ENCODE measurements at regions of chr19 and their contacts with region 1.

Region 1: GRCh38 chr19:55599468-55600279 is at the start of gene FIZ1:
- DNase-seq: peak; percentile 99
- ATAC-seq: peak; percentile 97
- H3K4me3 ChIP-seq: peak within 1 kb of the TSS; percentile 72 to 82
- H3K27ac ChIP-seq: peak within 1 kb of the TSS; percentile 83 to 89
- H3K4me1 ChIP-seq: no peaks in the 10 kb centered on the region
- H3K27me3 ChIP-seq: no peaks in the 10 kb centered on the region
- total RNA-seq, gene FIZ1: 12.7 to 13.2 TPM

Region 2: DNA sequence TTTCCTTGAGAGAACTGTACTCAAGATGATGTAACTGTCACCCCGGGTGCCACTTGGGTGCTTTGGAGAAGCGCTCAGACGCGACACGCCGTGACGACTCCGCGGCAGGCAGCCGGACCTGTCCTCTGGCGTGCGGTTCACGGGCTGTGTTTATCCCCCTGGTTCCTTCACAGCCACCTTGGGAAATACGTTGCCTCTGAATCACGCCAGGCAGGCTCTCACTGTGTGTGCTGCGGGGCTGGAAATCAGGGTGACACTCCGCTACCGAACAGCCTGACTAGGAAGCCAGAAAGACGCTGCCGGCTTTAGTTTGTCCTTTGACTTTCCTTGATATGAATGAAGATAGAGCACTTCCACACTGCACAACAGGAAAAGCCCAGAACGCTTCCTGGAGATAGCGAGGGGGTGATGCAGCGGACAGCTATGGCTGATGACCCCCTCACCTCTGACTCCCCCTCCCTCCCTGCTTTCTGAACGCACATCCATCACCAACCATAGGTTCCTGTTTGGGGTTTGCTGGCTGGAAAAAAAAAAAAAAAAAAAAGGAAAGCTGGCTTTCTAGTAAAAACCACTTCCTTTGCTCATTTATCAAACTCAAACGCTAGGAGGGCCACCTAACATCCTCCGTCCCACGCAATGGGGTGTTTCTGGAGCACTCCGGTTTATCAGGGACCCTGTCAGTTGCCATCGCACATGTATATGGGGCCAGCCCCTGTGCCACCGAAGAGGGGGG is 557.9 kb before region 1 on chr19:
- intact Hi-C with region 1: no loop called
- DNase-seq: no peak
- ATAC-seq: no peak
- H3K4me3 ChIP-seq: no peak overlapping the region
- H3K27ac ChIP-seq: no peak overlapping the region
- H3K4me1 ChIP-seq: no peaks in the 10 kb centered on the region
- H3K27me3 ChIP-seq: no peaks in the 10 kb centered on the region

Region 3: DNA sequence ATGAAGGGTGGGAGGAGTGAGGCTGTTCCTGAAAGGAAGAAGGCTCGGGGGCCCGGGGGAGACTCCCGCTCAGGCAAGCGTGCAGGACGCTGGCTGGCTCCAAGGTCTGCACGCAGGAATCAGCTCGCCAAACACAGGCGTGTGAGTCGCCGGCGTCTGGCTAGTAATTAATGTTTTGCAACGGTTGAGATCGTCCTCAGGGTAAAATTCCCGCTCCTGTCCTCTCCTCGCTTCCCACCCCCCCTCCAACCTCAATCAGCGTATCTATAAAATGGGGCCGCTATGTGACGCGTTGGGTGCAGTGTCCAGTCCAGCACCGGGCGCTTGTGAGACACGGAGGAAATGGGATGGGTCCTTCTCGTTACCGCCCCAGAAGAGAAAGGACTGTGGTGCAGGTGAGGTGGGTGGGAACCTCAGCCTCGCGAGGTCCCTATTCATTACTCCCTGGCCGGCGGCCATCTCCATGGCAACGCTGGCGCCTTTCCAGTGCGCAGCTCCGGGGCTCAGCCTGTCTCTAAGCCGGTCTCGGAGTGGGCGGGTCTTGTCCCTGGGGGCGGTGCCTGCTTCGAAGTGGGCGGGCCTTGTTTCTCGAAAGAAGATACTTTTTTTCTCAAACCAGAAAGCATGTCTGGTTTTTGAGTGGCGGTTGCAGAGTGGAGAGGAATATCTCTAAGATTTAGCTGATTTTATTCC is 12.6 kb before region 1 on chr19:
- intact Hi-C with region 1: loop called in 1 of 2 experiments (anchors 1 kb)
- DNase-seq: peak; percentile 95 to 97
- ATAC-seq: peak; percentile 89
- H3K4me3 ChIP-seq: no peak overlapping the region
- H3K27ac ChIP-seq: no peak overlapping the region
- H3K4me1 ChIP-seq: no peaks in the 10 kb centered on the region
- H3K27me3 ChIP-seq: no peaks in the 10 kb centered on the region